A673 (cell line): ENCODE measurements at regions of chr1 and their contacts with region 1.

Region 1: DNA sequence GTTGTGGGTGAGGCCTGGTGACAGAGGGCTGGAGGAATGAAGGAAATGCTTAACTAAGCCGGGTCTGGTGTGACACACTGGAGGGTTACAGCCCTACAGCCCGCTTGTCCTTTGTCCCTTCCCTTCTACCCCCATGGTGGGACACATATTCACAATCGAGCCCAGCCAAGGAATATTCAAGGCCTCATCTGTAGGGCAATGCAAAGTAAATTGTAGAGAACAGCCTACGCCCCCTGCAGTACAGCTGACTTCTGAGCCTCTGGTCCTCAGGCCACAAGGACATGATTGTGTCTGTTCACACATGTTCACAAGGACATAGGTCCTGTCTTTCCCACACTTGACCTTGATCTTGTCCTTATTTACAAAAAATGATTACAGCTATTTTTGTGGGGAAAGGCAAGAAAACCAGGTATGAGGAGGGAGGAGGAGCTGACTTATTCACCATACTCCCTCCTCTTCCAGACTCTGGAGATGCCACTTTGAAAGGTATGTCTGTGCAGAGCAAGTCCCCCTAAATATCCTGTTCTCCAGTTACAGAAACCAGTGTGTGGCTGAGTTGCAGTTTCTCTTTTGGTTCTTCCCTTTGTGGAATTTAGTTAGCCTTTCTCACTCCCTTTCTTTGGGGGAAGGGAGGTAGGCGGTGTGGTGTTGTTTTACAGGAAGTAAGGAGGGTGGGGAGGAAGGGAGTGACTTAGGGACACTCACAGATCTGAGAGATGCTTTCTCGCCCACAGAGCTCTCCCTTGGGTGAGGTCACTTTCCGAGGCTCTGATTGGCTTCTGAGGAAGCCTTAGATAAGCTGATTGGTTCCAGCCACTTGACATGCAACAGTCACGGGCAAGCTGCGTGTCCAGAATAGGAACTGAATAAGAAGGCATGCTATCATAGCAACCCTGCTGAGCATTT is 14.6 kb downstream of the POLR3GL start:
- DNase-seq: peak; percentile 100
- H3K4me3 ChIP-seq: peak overlapping the region; percentile 18
- H3K27ac ChIP-seq: peak overlapping the region; percentile 95
- H3K4me1 ChIP-seq: peaks cover 30% of the 10 kb centered on the region
- H3K27me3 ChIP-seq: no peaks in the 10 kb centered on the region
- CTCF ChIP-seq: peak; percentile 53

Region 2: GRCh38 chr1:145837656-145838055 is 141.5 kb before region 1 on chr1:
- CTCF ChIA-PET with region 1: no interaction called
- POLR2A ChIA-PET with region 1: interaction called, 12 read pairs
- intact Hi-C with region 1: no loop called
- DNase-seq: no peak
- H3K4me3 ChIP-seq: no peak overlapping the region
- H3K27ac ChIP-seq: no peak overlapping the region
- H3K4me1 ChIP-seq: no peaks in the 10 kb centered on the region
- H3K27me3 ChIP-seq: no peaks in the 10 kb centered on the region
- CTCF ChIP-seq: no peak

Region 3: DNA sequence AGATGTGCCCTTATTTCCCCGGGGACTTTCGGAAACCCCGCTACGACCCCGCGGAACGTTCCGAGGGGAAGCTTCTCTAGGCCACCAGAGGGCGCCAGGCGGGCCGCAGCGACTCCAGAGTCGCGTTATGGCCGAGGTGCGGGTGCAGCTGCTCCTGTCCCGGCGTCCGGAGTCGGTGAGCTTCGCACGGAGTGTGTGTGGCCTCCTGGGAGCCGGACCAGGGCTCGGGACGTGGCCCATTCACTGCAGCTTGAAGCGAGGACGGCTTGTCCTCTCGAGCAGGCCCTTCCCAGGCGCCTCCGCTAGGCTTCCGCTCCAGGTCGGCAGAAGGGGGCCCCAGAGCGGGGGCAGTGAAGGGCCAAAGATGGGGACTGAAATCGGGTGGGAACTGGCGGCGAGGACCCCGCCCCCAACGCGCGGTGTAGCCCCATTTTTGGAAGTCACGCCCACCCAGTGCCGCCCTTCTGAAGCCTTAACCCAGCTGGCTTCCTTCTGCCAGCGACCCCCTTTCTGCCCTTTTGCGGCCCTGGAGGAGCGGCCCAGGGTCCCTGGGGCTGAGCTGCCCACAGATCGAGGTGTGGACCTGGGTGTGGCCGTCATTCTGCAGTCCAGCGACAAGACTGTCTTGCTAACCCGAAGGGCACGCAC is 133.5 kb before region 1 on chr1 and contains the start of gene NUDT17:
- CTCF ChIA-PET with region 1: interaction called, 4 read pairs
- POLR2A ChIA-PET with region 1: no interaction called
- intact Hi-C with region 1: loop called (anchors 5 kb)
- DNase-seq: peak; percentile 88
- H3K4me3 ChIP-seq: peak within 1 kb of the TSS; percentile 74
- H3K27ac ChIP-seq: peak within 1 kb of the TSS; percentile 85
- H3K4me1 ChIP-seq: peaks cover 12% of the 10 kb centered on the region
- H3K27me3 ChIP-seq: no peaks in the 10 kb centered on the region
- CTCF ChIP-seq: peak; percentile 98
- total RNA-seq, gene NUDT17: 3.4 and 6.6 TPM in 2 replicates

Region 4: GRCh38 chr1:145885738-145886287 is 93.3 kb before region 1 on chr1 and contains the start of gene ANKRD35:
- CTCF ChIA-PET with region 1: no interaction called
- POLR2A ChIA-PET with region 1: no interaction called
- intact Hi-C with region 1: no loop called
- DNase-seq: peak; percentile 90
- H3K4me3 ChIP-seq: peak within 1 kb of the TSS; percentile 69
- H3K27ac ChIP-seq: no peak within 1 kb of the TSS
- H3K4me1 ChIP-seq: peaks cover 2% of the 10 kb centered on the region
- H3K27me3 ChIP-seq: peaks cover 22% of the 10 kb centered on the region
- CTCF ChIP-seq: no peak
- total RNA-seq, gene ANKRD35: not detected in 2 replicates

Region 5: DNA sequence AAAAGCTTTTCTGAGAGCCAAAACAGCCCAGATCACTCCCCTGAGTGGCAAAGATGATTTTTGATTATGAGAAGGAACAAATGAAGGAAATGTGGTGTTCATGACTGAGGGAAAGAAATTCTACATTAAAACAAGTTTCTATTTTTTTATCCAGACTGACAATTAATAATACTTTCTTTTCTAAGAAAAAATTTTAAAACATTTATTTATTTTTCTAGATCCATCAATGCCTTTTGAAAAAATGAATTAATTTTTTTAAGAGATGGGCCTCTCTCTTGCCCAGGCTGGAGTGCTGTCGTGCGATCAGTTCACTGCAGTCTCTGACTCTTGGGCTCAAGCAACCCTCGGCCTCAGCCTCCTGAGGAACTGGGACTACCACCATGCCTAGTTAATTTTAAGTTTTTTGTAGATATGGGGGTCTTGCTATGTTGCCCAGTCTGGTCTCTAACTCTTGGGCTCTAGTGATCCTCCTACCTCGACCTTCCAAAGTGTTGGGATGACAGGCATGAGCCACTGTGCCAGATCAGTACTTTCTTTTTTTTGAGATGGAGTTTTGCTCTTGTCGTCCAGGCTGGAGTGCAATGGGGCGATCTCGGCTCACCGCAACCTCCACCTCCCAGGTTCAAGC is 28.5 kb after region 1 on chr1:
- CTCF ChIA-PET with region 1: interaction called, 26 read pairs
- POLR2A ChIA-PET with region 1: interaction called, 10 read pairs
- intact Hi-C with region 1: loop called (anchors 1 kb)
- DNase-seq: no peak
- H3K4me3 ChIP-seq: no peak overlapping the region
- H3K27ac ChIP-seq: no peak overlapping the region
- H3K4me1 ChIP-seq: peaks cover 3% of the 10 kb centered on the region
- H3K27me3 ChIP-seq: no peaks in the 10 kb centered on the region
- CTCF ChIP-seq: no peak; the same call in 1 of the 2 replicates